ENCODE measurements at regions of chr12 and their contacts with region 1.

Region 1: GRCh38 chr12:54324617-54325441 is at the start of gene COPZ1:
- DNase-seq: peak; percentile 99
- ATAC-seq: peak; percentile 86
- H3K4me3 ChIP-seq: peak within 1 kb of the TSS; percentile 98
- H3K27ac ChIP-seq: peak within 1 kb of the TSS; percentile 90
- H3K4me1 ChIP-seq: peaks cover 35 to 43% of the 10 kb centered on the region in 2 experiments
- H3K27me3 ChIP-seq: no peaks in the 10 kb centered on the region
- CTCF ChIP-seq: peak; percentile 79 to 85 (median 79)
- POLR2A ChIP-seq: peak; percentile 63
- RAD21 ChIP-seq: peak; percentile 90
- total RNA-seq, gene COPZ1: 191 TPM

Region 2: GRCh38 chr12:54251667-54252284 is 73.1 kb before region 1 on chr12:
- CTCF ChIA-PET with region 1: interaction called, 16 read pairs
- POLR2A ChIA-PET with region 1: interaction called, 6 read pairs
- RAD21 ChIA-PET with region 1: interaction called in 1 of 2 experiments, 3 read pairs
- intact Hi-C with region 1: no loop called
- DNase-seq: peak; percentile 37
- ATAC-seq: peak; percentile 64
- H3K4me3 ChIP-seq: no peak overlapping the region
- H3K27ac ChIP-seq: no peak overlapping the region
- H3K4me1 ChIP-seq: peaks cover 12 to 13% of the 10 kb centered on the region in 2 experiments
- H3K27me3 ChIP-seq: no peaks in the 10 kb centered on the region
- CTCF ChIP-seq: peak; percentile 64 to 75 (median 64); a peak in 5 of 6 replicates
- POLR2A ChIP-seq: no peak
- RAD21 ChIP-seq: peak; percentile 66

Region 3: DNA sequence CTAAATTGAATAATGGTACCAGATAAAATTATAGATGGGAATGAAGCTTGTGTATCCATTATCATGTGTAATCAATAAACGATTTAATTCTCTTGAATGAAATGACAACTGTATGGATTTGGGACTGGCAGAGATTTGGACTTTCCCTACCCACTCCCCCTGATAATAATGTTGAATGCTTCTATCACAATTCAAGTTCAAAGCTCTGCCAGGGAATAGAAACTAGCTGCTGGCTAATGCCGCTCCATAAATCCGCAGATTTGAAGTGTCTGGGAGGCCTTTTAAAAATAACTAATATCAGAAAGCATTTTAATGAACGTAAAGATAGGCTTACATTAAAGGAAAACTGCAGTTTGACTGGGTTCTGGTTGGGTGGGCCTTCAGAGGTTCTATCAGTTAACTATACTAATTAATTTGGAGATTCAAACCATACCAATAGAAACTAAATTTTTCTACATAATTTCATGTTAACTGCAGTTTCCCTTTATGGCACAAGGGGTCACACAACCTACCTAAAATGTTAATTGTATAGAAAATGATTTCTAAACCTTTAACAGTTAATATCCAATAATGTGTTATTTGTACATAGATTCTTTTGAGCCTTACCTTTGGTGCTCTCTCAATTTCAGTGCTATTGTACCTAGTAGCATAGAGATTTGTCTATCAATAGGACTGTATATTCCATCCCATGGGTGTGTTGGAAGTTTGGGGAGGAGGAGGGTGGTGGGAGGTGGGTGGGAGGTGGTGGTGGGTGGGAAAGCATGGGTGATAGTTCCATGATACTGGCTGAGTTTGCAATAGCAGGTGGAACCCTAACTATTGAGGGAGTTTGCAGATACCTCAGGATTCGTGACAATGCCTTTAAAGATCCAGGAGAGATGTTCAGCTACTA is 39.4 kb before region 1 on chr12:
- CTCF ChIA-PET with region 1: interaction called, 15 read pairs
- POLR2A ChIA-PET with region 1: interaction called, 73 read pairs
- RAD21 ChIA-PET with region 1: interaction called in 1 of 2 experiments, 3 read pairs
- intact Hi-C with region 1: loop called (anchors 1 kb)
- DNase-seq: no peak
- ATAC-seq: no peak
- H3K4me3 ChIP-seq: no peak overlapping the region
- H3K27ac ChIP-seq: 0 out of 2 replicates have a peak overlapping the region, but pooled peaks have one; percentile 16
- H3K4me1 ChIP-seq: peaks cover 11 to 65% of the 10 kb centered on the region in 2 experiments; a peak in 3 of 4 replicates
- H3K27me3 ChIP-seq: no peaks in the 10 kb centered on the region
- CTCF ChIP-seq: peak in 2 of 3 experiments; percentile 23 to 48; a peak in 2 of 6 replicates
- POLR2A ChIP-seq: no peak
- RAD21 ChIP-seq: no peak

Region 4: GRCh38 chr12:54294152-54294952 is 30.5 kb before region 1 on chr12:
- CTCF ChIA-PET with region 1: interaction called, 20 read pairs
- POLR2A ChIA-PET with region 1: interaction called, 15 read pairs
- RAD21 ChIA-PET with region 1: interaction called in 1 of 2 experiments, 4 read pairs
- intact Hi-C with region 1: loop called (anchors 1 kb)
- DNase-seq: no peak
- ATAC-seq: peak; percentile 79
- H3K4me3 ChIP-seq: no peak overlapping the region
- H3K27ac ChIP-seq: no peak overlapping the region
- H3K4me1 ChIP-seq: no peaks in the 10 kb centered on the region
- H3K27me3 ChIP-seq: peaks cover 4% of the 10 kb centered on the region; the same call in 1 of the 2 replicates
- CTCF ChIP-seq: peak; percentile 90 to 96 (median 91); a peak in 5 of 6 replicates
- POLR2A ChIP-seq: no peak
- RAD21 ChIP-seq: peak; percentile 90

Region 5: GRCh38 chr12:54300732-54301427 is 23.9 kb before region 1 on chr12 and contains the start of gene NFE2:
- CTCF ChIA-PET with region 1: interaction called, 20 read pairs
- POLR2A ChIA-PET with region 1: interaction called, 7 read pairs
- RAD21 ChIA-PET with region 1: no interaction called
- intact Hi-C with region 1: no loop called
- DNase-seq: no peak
- ATAC-seq: peak; percentile 90
- H3K4me3 ChIP-seq: peak within 1 kb of the TSS; percentile 31 to 55
- H3K27ac ChIP-seq: peak within 1 kb of the TSS; percentile 39; the same call in 1 of the 2 replicates
- H3K4me1 ChIP-seq: peaks cover 31 to 33% of the 10 kb centered on the region in 2 experiments
- H3K27me3 ChIP-seq: peaks cover 12% of the 10 kb centered on the region; the same call in 1 of the 2 replicates
- CTCF ChIP-seq: no peak
- POLR2A ChIP-seq: no peak
- RAD21 ChIP-seq: no peak
- total RNA-seq, gene NFE2: 1.3 TPM

Region 6: DNA sequence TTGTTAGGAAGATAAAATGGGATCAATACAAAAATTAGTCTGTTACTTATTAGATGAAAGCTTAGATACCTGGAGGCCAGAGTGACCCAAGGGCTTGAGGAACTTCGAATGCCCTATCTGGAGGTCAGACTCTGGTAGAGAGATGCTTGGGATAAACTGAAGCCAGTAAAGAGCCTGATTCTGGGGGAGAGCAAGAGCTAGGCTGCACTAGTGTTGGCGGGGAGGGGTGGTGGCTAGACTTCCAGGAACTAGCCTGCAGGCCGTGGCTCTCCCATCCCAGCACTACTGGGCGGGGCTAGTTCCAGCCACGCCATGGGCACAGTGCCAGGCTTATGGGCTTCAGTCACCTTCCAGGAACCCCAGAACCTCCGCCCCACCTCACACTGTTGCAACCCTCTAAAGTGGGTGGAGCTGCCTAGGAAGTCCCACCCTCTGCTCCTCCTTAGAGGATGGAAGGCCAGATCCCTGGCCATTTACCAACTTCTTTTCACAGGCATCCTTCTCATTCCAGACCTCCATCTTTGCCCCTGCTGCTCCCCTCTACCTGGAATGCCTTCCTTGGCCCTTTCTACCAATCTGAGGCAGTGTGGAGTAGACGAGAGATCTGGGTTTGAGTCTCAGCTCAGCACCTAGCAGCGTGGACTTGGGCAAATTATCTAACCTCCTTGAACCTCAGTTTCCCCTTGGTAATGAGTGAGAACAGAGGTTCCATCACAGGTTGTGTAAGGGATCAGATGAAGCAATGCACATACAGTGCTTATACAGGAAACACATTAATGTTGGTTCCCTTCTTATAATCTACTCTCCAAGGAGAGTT is 17.7 kb before region 1 on chr12:
- CTCF ChIA-PET with region 1: interaction called, 20 read pairs
- POLR2A ChIA-PET with region 1: interaction called, 10 read pairs
- RAD21 ChIA-PET with region 1: no interaction called
- intact Hi-C with region 1: loop called (anchors 2 kb)
- DNase-seq: peak; percentile 78
- ATAC-seq: peak; percentile 90
- H3K4me3 ChIP-seq: no peak overlapping the region
- H3K27ac ChIP-seq: no peak overlapping the region
- H3K4me1 ChIP-seq: peaks cover 31 to 32% of the 10 kb centered on the region in 2 experiments
- H3K27me3 ChIP-seq: no peaks in the 10 kb centered on the region
- CTCF ChIP-seq: no peak
- POLR2A ChIP-seq: no peak
- RAD21 ChIP-seq: no peak

Region 7: GRCh38 chr12:54337280-54337842 is 12.5 kb after region 1 on chr12:
- CTCF ChIA-PET with region 1: interaction called, 63 read pairs
- POLR2A ChIA-PET with region 1: interaction called, 20 read pairs
- RAD21 ChIA-PET with region 1: no interaction called
- intact Hi-C with region 1: no loop called
- DNase-seq: no peak
- ATAC-seq: no peak
- H3K4me3 ChIP-seq: no peak overlapping the region
- H3K27ac ChIP-seq: no peak overlapping the region
- H3K4me1 ChIP-seq: peaks cover 4 to 9% of the 10 kb centered on the region in 2 experiments; a peak in 3 of 4 replicates
- H3K27me3 ChIP-seq: no peaks in the 10 kb centered on the region
- CTCF ChIP-seq: no peak
- POLR2A ChIP-seq: no peak
- RAD21 ChIP-seq: no peak

Region 8: DNA sequence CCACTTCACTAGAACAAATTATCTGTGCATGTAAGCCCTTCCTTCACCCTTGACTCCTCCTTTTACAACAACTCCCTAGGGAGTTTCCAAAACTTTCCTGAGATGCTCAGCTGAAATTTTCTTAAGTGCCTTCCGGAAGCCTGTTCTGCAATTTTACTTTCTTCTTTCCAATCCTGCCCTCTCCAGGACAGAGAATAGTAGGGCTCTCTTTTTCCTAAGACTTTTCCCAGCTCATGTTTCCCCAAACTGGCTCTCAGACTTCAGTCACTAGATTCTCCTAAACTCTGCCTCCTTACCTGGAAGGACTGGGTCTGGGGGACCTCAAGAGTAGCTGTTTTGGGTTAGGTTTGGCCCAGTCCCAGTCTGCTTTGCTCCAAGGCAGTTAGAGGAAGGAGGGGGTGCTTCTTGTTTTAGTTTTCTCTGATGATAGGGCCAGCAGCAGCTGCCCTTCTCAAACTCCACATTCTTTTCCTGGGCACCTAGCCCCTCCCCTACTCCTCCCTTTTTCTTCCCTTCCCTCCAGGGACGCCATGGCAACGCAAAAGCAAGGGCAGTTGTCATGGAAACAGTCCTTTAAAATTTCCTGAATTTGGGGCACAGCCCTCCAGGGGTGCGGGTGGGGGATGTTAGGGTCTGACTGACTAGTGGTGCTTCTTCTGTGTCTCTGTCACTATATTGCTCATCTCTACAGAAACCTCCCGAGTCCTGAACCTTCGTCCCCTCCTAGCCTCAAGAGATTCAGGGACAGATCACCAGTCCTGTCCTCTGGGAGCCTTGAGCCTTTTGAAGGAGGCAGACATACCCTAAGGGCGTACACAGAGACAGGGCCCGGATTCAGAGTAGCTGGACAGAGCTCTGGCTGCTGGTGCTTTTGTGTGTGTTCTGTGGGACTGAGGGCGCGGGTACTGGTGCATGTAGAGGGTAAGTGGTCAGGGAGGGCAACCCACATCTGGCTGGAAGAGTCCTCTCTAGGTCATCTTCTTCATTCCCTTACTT is 246.7 kb after region 1 on chr12:
- CTCF ChIA-PET with region 1: no interaction called
- POLR2A ChIA-PET with region 1: no interaction called
- RAD21 ChIA-PET with region 1: no interaction called
- intact Hi-C with region 1: no loop called
- DNase-seq: no peak
- ATAC-seq: no peak
- H3K4me3 ChIP-seq: no peak overlapping the region
- H3K27ac ChIP-seq: no peak overlapping the region
- H3K4me1 ChIP-seq: no peaks in the 10 kb centered on the region
- H3K27me3 ChIP-seq: peaks cover 21% of the 10 kb centered on the region; the same call in 1 of the 2 replicates
- CTCF ChIP-seq: no peak
- POLR2A ChIP-seq: no peak
- RAD21 ChIP-seq: no peak